Caco-2 (cell line): ENCODE measurements at regions of chr11 and their contacts with region 1.

Region 1: DNA sequence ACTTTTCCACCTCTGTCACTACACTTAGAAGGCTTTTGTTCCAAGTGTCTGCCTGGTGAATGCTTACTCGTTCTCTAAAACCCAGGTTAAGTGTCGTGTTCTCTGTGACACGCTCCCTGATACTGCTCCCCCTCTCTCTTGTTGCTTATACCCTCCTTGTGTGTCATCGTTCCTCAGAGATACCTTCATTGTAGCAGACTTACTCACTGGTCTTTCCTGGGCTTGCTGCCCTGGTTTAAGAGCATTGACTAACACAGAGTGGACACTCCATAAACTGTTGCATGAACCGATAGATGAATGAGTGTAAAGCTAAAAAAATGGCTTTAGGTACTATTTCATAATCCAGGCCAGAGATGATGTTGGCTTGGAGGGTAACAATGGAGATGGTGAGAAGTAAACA is 171.3 kb downstream of the GRIK4 start:
- DNase-seq: peak in 1 of 2 experiments; percentile 5
- H3K4me3 ChIP-seq: no peak overlapping the region
- H3K4me3 Mint-ChIP-seq: no peak overlapping the region
- H3K27ac Mint-ChIP-seq: no peak overlapping the region
- H3K4me1 ChIP-seq: no peaks in the 10 kb centered on the region
- H3K4me1 Mint-ChIP-seq: no peaks in the 10 kb centered on the region
- H3K27me3 ChIP-seq: no peaks in the 10 kb centered on the region
- H3K27me3 Mint-ChIP-seq: peaks cover 4% of the 10 kb centered on the region
- CTCF ChIP-seq: no peak

Region 2: DNA sequence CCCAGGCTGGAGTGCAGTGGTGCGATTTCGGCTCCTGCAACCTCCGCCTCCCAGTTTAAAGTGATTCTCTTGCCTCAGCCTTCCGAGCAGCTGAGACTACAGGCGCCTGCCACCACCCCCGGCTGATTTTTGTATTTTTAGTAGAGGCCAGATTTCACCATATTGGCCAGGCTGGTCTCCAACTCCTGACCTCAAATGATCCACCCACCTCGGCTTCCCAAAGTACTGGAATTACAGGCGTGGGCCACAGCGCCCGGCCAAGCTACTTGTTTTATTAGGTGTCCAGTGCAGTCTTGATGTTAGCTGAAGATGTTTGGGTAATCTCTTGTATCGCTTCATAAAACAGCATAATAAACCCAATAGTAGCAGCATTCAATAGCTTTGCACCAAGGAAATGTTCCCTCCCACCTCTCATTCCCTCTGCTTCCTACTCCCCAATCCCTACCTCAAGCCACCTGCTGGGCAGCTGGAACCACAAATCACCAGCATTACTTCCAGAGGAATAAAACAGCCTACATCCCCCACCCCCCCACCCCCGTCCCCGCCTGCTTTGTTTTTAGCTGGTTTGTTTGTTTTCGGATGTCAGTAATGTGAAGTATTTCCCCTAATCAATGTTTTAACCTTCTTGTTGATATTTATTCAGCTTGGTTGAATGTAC is 182.3 kb before region 1 on chr11:
- CTCF ChIA-PET with region 1: interaction called, 10 read pairs
- POLR2A ChIA-PET with region 1: no interaction called
- intact Hi-C with region 1: no loop called
- DNase-seq: no peak
- H3K4me3 ChIP-seq: no peak overlapping the region
- H3K4me3 Mint-ChIP-seq: no peak overlapping the region
- H3K27ac Mint-ChIP-seq: no peak overlapping the region
- H3K4me1 ChIP-seq: no peaks in the 10 kb centered on the region
- H3K4me1 Mint-ChIP-seq: peaks cover 7% of the 10 kb centered on the region
- H3K27me3 ChIP-seq: no peaks in the 10 kb centered on the region
- H3K27me3 Mint-ChIP-seq: peaks cover 2% of the 10 kb centered on the region
- CTCF ChIP-seq: no peak

Region 3: DNA sequence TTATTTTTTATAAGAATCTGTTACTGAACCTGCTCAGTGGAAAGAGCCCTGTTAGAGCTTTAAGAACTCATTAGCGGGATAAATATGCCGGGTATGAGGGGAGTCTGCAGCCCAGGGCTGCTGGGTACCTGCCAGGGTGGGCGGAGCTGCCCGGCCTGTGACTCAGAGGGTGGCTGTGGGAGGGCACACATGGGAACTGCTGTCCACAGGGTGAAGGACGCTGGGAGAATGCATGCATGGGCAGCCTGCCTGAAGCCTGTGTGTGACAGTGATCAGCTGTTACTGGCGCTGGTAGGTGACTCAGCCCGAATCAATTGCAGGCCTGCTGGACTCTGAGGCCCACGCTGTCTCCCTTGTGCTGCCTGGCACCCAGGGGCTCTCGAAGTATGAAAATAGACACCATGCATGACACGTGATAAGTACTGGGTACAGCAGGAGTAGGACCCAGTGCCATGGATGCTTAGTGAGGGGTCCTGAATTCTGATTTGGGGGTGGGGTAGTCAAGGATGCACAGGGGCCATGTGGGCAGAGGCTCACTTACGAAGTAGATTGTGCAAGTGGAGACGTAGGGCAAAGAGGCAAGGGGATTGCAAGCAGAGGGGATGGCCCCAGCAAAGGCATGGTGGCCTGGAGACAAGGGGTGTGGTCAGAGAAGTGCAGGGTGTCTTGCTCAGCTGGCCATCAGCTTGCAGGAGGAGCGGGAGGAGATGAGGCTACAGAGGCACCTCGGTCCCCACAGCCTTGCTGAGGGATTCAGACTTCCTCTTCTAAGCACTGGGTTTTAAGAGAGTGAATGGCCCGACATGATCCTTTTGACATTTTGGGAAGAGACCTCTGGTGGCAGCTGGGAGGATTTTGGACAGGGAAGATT is 134.8 kb before region 1 on chr11:
- CTCF ChIA-PET with region 1: interaction called, 4 read pairs
- POLR2A ChIA-PET with region 1: no interaction called
- intact Hi-C with region 1: loop called (anchors 1 kb)
- DNase-seq: peak in 1 of 2 experiments; percentile 45
- H3K4me3 ChIP-seq: no peak overlapping the region
- H3K4me3 Mint-ChIP-seq: no peak overlapping the region
- H3K27ac Mint-ChIP-seq: no peak overlapping the region
- H3K4me1 ChIP-seq: no peaks in the 10 kb centered on the region
- H3K4me1 Mint-ChIP-seq: peaks cover 5% of the 10 kb centered on the region
- H3K27me3 ChIP-seq: no peaks in the 10 kb centered on the region
- H3K27me3 Mint-ChIP-seq: no peaks in the 10 kb centered on the region
- CTCF ChIP-seq: peak; percentile 29 to 42

Region 4: DNA sequence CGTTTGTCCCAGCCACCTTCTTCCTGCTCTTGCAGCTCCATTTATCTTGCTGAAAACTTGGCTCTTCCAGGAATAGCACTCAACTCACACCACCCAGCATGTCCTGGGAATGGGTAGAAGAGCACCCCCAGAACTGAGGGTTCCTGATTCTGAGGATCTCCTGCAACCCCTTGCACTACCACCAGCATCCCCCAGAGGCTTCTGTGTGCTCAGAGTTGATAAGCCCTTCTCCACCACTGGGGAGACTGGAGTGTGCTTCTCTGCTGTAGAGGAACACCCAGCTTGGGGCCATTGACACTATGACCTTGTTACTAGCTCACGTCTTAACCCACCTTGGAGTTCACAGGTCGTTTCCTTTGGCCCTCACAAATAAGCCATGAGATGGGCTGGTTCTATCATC is 50.3 kb before region 1 on chr11:
- CTCF ChIA-PET with region 1: interaction called, 15 read pairs
- POLR2A ChIA-PET with region 1: no interaction called
- intact Hi-C with region 1: loop called (anchors 5 kb)
- DNase-seq: peak in 1 of 2 experiments; percentile 30
- H3K4me3 ChIP-seq: no peak overlapping the region
- H3K4me3 Mint-ChIP-seq: no peak overlapping the region
- H3K27ac Mint-ChIP-seq: no peak overlapping the region
- H3K4me1 ChIP-seq: peaks cover 9% of the 10 kb centered on the region; the same call in 1 of the 2 replicates
- H3K4me1 Mint-ChIP-seq: no peaks in the 10 kb centered on the region
- H3K27me3 ChIP-seq: no peaks in the 10 kb centered on the region
- H3K27me3 Mint-ChIP-seq: no peaks in the 10 kb centered on the region
- CTCF ChIP-seq: peak; percentile 24 to 59

Region 5: DNA sequence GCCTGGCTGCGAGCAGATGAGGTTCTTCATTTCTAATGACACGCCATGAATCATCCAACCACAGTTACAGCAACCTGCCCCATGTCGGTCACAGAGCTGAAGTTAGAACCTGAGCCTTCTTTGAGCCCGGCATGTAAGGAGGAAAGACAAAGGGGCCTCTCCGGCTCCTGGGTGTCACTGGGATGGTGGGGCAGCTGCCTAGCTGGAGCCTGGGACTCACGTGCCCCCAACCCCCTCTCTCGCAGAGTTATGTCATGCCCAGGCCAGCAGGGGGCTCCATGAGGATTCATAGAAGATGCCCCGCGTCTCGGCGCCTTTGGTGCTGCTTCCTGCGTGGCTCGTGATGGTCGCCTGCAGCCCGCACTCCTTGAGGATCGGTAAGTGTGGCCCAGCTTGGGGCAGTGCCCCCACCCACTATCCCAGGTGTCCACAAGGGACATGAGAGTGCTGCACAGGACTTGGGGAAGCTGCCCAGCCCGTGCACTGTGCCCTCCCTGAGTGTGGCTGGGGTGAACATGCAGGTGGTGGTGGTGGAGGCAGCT is 22.8 kb before region 1 on chr11:
- CTCF ChIA-PET with region 1: interaction called, 7 read pairs
- POLR2A ChIA-PET with region 1: no interaction called
- intact Hi-C with region 1: loop called (anchors 1 kb)
- DNase-seq: peak; percentile 55 to 63
- H3K4me3 ChIP-seq: no peak overlapping the region
- H3K4me3 Mint-ChIP-seq: no peak overlapping the region
- H3K27ac Mint-ChIP-seq: no peak overlapping the region
- H3K4me1 ChIP-seq: no peaks in the 10 kb centered on the region
- H3K4me1 Mint-ChIP-seq: no peaks in the 10 kb centered on the region
- H3K27me3 ChIP-seq: no peaks in the 10 kb centered on the region
- H3K27me3 Mint-ChIP-seq: peaks cover 5% of the 10 kb centered on the region
- CTCF ChIP-seq: peak; percentile 53 to 66

Region 6: GRCh38 chr11:120696597-120697218 is 13.8 kb after region 1 on chr11:
- CTCF ChIA-PET with region 1: interaction called, 16 read pairs
- POLR2A ChIA-PET with region 1: no interaction called
- intact Hi-C with region 1: no loop called
- DNase-seq: peak in 1 of 2 experiments; percentile 34
- H3K4me3 ChIP-seq: no peak overlapping the region
- H3K4me3 Mint-ChIP-seq: no peak overlapping the region
- H3K27ac Mint-ChIP-seq: no peak overlapping the region
- H3K4me1 ChIP-seq: no peaks in the 10 kb centered on the region
- H3K4me1 Mint-ChIP-seq: no peaks in the 10 kb centered on the region
- H3K27me3 ChIP-seq: no peaks in the 10 kb centered on the region
- H3K27me3 Mint-ChIP-seq: no peaks in the 10 kb centered on the region
- CTCF ChIP-seq: peak in 1 of 2 experiments; percentile 31

Region 7: DNA sequence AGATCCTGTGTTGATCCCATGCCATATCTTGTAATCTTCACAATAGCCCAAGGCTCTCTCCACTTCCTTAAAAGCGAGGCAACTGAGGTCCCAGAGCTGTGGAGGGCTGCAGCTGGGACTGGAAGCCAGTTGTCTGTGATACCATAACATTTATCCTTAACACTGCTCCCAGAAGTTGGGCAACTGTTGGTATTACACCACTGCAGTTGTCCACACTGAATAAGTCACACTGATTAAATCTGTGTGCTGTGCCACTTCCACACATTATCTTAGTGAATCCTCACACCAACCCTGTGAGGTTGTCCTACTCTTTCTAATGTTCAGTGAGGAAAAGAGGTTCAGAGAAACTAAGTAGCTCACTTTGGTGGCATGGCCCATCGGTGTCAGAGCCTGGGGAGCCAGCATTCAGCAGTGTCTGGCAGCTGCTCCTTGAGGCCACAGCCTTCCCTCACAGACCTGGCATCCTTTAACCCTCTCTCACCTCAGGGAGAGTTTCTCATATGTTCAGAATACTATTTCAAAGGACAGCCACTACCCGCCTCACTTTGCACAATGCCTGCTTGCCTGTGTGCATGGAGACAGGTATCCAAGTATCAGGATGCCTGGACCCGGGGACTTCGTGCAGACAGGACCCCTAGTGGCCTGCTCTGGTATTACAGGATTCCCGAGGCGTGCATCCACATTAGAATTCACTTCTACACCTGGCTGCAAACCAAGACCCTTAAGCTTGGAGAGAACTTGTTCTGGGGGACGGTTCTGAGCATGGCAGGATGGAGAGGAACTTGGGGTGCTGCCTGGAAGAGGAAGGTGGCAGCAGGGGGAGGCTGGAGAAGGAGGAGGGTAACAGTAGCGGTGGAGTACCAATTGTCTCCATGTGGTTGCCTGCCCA is 119.2 kb after region 1 on chr11:
- CTCF ChIA-PET with region 1: interaction called, 8 read pairs
- POLR2A ChIA-PET with region 1: no interaction called
- intact Hi-C with region 1: loop called (anchors 2 kb)
- DNase-seq: peak; percentile 78 to 85
- H3K4me3 ChIP-seq: no peak overlapping the region
- H3K4me3 Mint-ChIP-seq: no peak overlapping the region
- H3K27ac Mint-ChIP-seq: no peak overlapping the region
- H3K4me1 ChIP-seq: peaks cover under 1% of the 10 kb centered on the region; the same call in 1 of the 2 replicates
- H3K4me1 Mint-ChIP-seq: peaks cover 4% of the 10 kb centered on the region
- H3K27me3 ChIP-seq: no peaks in the 10 kb centered on the region
- H3K27me3 Mint-ChIP-seq: peaks cover 2% of the 10 kb centered on the region
- CTCF ChIP-seq: peak; percentile 96 to 99